PC-9 (cell line): ENCODE measurements at regions of chr3 and their contacts with region 1.

Region 1: GRCh38 chr3:49899815-49900214 is 3.9 kb downstream of the MST1R start:
- DNase-seq: no peak
- H3K4me3 ChIP-seq: peak overlapping the region; percentile 61
- H3K27ac ChIP-seq: peak overlapping the region; percentile 95
- H3K4me1 ChIP-seq: peaks cover 29% of the 10 kb centered on the region
- H3K27me3 ChIP-seq: no peaks in the 10 kb centered on the region
- CTCF ChIP-seq: no peak; the same call in 1 of the 2 replicates

Region 2: GRCh38 chr3:49813497-49814174 is 86.2 kb before region 1 on chr3 and contains the start of gene UBA7:
- CTCF ChIA-PET with region 1: no interaction called
- POLR2A ChIA-PET with region 1: interaction called, 14 read pairs
- intact Hi-C with region 1: no loop called
- DNase-seq: peak in 1 of 2 experiments; percentile 49
- H3K4me3 ChIP-seq: no peak within 1 kb of the TSS; the same call in 1 of the 2 replicates
- H3K27ac ChIP-seq: no peak within 1 kb of the TSS
- H3K4me1 ChIP-seq: no peaks in the 10 kb centered on the region
- H3K27me3 ChIP-seq: no peaks in the 10 kb centered on the region
- CTCF ChIP-seq: no peak
- total RNA-seq, gene UBA7: 48.6 and 56.5 TPM in 2 replicates

Region 3: DNA sequence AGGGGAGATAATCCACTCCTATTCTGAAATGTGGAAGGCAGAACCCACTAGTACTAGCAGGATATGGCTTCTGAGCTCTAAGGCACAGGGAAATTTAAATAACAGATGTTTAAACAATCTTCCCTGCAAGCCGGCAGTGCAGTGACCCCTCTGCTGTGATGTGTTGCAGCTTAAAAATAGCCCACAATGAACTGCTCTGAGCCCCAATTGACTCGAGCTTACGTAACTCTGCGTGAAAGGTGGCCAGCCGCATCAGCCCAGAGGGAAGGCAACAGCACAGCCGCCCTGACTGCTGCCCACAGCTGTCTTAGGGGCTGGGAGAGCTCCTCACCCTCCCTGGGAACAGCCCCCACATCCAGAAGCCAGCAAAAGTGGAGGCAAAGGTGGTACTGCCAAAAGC is 17.6 kb before region 1 on chr3:
- CTCF ChIA-PET with region 1: interaction called, 9 read pairs
- POLR2A ChIA-PET with region 1: interaction called, 15 read pairs
- intact Hi-C with region 1: no loop called
- DNase-seq: no peak
- H3K4me3 ChIP-seq: no peak overlapping the region
- H3K27ac ChIP-seq: no peak overlapping the region
- H3K4me1 ChIP-seq: no peaks in the 10 kb centered on the region
- H3K27me3 ChIP-seq: no peaks in the 10 kb centered on the region
- CTCF ChIP-seq: no peak

Region 4: DNA sequence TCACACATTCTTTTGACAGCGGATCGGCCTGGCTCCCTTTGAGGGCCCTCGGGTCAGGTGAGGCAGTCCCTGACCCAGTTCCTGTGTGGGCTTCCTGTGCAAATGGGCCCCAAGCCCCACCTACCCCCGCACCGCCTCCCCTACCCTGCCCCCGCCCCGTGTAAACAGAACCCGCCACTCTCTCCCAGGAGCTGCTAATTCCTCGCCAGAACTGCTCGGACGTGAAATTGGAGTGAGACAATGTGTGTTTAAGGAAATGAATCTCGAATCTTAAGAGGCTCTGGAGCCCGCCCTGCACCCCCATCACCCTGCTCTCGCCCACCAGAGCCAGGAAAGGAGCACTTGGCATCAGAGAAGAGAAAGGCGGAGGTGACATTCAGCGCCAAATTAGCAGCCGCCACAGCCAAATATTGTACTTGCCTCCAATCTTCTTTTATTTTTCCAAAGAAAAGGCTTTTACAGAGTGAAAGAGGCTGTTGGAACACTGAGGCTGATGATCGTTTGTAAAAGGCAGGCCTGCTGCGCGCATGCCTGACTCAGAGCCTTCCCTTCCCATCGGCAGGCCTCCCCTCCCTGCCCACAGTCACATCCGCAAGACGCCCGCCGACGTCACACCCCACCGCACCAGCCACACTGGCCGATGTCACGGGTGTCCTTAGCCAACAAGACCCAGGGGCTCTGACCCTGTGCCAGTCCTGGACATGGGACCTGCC is 550.5 kb after region 1 on chr3:
- CTCF ChIA-PET with region 1: no interaction called
- POLR2A ChIA-PET with region 1: no interaction called
- intact Hi-C with region 1: no loop called
- DNase-seq: no peak
- H3K4me3 ChIP-seq: no peak overlapping the region
- H3K27ac ChIP-seq: no peak overlapping the region
- H3K4me1 ChIP-seq: no peaks in the 10 kb centered on the region
- H3K27me3 ChIP-seq: peaks cover 44% of the 10 kb centered on the region
- CTCF ChIP-seq: no peak